Adrenal gland (tissue), 19 donors: ENCODE measurements at regions of chr21 and their contacts with region 1.

Region 1: GRCh38 chr21:40143822-40144525 is 276.7 kb downstream of the PCP4 start:
- DNase-seq: peak; percentile 45 to 86 (median 69)
- H3K4me3 ChIP-seq: no peak overlapping the region
- H3K27ac ChIP-seq: no peak overlapping the region
- H3K4me1 ChIP-seq: no peaks in the 10 kb centered on the region
- H3K27me3 ChIP-seq: no peaks in the 10 kb centered on the region
- CTCF ChIP-seq: peak; percentile 79 to 95 (median 86)
- POLR2A ChIP-seq: no peak

Region 2: GRCh38 chr21:39319181-39319756 is 824.7 kb before region 1 on chr21:
- intact Hi-C with region 1: no loop called
- DNase-seq: peak in 2 of 7 donors; percentile 11 to 40
- H3K4me3 ChIP-seq: no peak overlapping the region
- H3K27ac ChIP-seq: no peak overlapping the region
- H3K4me1 ChIP-seq: peaks cover 14 to 15% of the 10 kb centered on the region in 2 donors
- H3K27me3 ChIP-seq: no peaks in the 10 kb centered on the region
- CTCF ChIP-seq: no peak
- POLR2A ChIP-seq: no peak

Region 3: DNA sequence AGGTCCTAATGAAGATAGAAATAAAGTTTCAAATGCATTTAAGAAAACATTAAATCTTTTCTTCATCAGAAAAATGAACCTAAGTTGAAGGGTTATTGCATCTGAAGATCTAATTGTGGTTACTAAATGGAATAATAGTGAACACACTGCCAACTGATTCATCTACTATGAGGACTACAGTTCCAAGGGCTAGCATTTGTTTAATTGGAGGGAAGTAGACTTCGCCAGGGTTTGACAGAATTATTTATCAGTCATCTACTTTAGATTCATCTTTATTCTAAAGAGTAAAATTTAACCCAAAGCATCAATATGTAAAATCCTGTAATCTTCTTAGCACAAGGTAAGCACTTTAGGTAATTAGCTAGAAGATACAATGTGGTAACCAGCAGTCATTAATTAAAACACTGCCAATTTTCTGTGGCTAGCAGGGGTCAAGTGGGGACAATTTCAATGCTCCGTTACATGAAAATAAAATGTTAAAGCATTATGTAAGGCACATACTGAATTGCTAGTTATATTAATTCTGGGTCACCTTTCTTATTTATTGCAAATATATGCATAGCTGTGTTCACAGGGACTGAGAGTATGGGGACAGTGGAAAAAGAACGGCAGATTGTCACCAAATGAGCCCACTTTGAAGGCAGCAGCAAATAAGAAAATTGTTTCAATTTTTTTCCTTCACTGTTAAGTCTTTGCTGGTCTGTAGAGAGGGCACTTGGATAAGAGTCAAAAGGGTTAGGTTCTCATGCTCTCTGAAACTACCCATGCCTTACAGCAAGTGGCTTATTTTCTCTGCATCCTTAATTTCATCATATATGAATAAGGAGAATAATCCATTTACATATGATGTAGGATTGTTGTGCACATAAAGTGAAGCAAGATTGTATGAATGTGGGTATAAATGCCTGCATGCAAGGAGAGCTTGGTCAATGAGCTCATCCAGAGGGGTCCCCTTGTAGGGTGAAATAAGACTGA is 139.2 kb after region 1 on chr21:
- intact Hi-C with region 1: no loop called
- DNase-seq: no peak
- H3K4me3 ChIP-seq: no peak overlapping the region
- H3K27ac ChIP-seq: no peak overlapping the region
- H3K4me1 ChIP-seq: no peaks in the 10 kb centered on the region
- H3K27me3 ChIP-seq: no peaks in the 10 kb centered on the region
- CTCF ChIP-seq: no peak
- POLR2A ChIP-seq: no peak

Region 4: GRCh38 chr21:40385892-40386599 is 242.1 kb after region 1 on chr21:
- intact Hi-C with region 1: loop called (anchors 2 to 5 kb)
- DNase-seq: peak; percentile 57 to 81 (median 76)
- H3K4me3 ChIP-seq: no peak overlapping the region
- H3K27ac ChIP-seq: no peak overlapping the region
- H3K4me1 ChIP-seq: no peaks in the 10 kb centered on the region
- H3K27me3 ChIP-seq: no peaks in the 10 kb centered on the region
- CTCF ChIP-seq: peak; percentile 72 to 96 (median 87)
- POLR2A ChIP-seq: no peak

Region 5: DNA sequence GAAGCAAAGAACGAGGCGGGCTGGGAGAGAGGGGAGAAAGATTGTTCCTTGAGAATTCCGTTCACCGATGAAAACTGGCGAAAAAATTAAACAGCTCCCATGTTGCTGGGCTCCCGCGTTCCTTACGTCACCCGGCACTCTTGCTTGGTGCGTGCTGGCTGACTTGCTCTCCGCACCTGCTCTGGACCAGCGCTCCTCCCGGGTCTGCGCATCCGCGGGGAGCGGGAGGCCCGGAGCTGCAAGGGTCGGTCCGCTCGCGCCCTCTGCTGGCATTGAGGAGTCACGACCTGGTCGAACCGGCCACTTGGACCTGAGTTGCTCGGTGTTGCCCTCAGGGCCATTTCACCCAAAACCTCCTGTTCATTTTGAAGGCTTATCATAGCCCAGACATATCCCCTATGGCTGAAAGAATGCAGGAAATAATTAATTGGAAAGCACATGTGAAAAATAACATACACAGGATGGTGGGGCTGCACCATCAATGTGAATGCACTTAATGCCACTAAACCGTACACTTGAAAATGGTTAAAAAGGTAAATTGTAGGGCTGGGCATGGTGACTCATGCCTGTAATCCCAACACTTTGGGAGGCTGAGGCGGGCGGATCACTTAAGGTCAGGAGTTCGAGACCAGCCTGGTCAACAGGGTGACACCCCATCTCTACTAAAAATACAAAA is 925.1 kb after region 1 on chr21:
- intact Hi-C with region 1: loop called in 1 of 2 experiments (anchors 10 kb)
- DNase-seq: peak; percentile 60 to 87 (median 81)
- H3K4me3 ChIP-seq: peak overlapping the region in 1 of 4 donors; percentile 32
- H3K27ac ChIP-seq: no peak overlapping the region
- H3K4me1 ChIP-seq: no peaks in the 10 kb centered on the region
- H3K27me3 ChIP-seq: peaks cover 11% of the 10 kb centered on the region
- CTCF ChIP-seq: peak; percentile 60 to 85 (median 76)
- POLR2A ChIP-seq: no peak

Region 6: DNA sequence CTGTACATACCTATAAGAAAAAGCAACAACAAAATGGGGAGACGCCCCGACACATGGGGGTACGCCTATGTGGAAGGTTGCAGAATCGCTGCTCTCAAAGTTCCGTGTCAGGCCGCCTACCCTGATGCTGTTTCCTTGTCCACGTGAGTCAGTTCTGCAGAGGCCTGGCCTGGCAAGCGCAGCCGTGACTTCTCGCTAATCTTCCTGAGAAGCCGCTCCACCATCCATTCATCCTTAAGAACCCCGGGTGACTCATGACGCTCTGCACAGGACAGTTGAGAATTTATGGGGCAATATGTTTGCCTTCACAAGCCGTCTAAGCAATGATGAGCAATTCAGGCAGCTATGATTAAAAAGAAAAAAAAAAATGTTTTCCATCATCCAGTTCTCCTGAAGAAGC is 1486.3 kb after region 1 on chr21:
- intact Hi-C with region 1: no loop called
- DNase-seq: no peak
- H3K4me3 ChIP-seq: no peak overlapping the region
- H3K27ac ChIP-seq: no peak overlapping the region
- H3K4me1 ChIP-seq: no peaks in the 10 kb centered on the region
- H3K27me3 ChIP-seq: no peaks in the 10 kb centered on the region
- CTCF ChIP-seq: no peak
- POLR2A ChIP-seq: no peak